ENCODE measurements at regions of chr19 and their contacts with region 1.

Region 1: GRCh38 chr19:39001041-39001440 is 25.5 kb upstream of the FBXO17 start:
- DNase-seq: no peak
- ATAC-seq: no peak
- H3K4me3 ChIP-seq: no peak overlapping the region
- H3K27ac ChIP-seq: no peak overlapping the region
- H3K4me1 ChIP-seq: peaks cover 13% of the 10 kb centered on the region
- H3K27me3 ChIP-seq: no peaks in the 10 kb centered on the region
- CTCF ChIP-seq: no peak
- EP300 ChIP-seq: no peak
- POLR2A ChIP-seq: no peak
- RAD21 ChIP-seq: no peak

Region 2: DNA sequence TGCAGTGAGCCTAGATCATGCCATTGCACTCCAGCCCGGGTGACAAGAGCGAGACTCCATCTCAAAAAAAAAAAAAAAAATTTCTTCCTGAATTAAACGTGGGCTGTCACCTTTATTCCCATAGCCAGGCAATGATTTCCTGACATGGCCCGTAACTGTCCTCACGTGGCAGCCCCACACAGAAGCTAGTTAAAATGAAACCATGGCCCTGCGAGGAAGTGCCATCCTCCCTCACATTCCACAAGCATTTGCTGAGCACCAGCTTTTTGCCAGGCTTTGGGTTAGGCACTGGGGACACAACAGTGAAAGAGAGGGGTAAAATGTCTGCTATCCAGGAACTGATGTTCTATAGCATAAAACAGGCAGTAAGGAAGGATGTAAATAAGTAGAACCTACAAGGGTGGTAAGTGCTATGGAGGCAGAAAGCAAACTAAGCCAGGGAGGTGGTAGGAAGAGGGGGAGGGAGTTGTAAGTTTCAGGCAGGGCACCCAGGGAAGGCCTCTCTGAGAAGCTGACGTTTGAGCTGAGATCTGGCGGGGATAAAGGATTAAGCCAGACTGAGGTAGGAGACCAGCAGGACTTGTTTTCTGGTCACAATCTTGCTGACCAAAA is 44.6 kb after region 1 on chr19:
- CTCF ChIA-PET with region 1: no interaction called
- POLR2A ChIA-PET with region 1: no interaction called
- in situ Hi-C with region 1: no loop called
- intact Hi-C with region 1: loop called (anchors 1 kb)
- DNase-seq: no peak
- ATAC-seq: no peak
- H3K4me3 ChIP-seq: no peak overlapping the region; a peak in 1 of 6 replicates
- H3K27ac ChIP-seq: no peak overlapping the region
- H3K4me1 ChIP-seq: peaks cover 7% of the 10 kb centered on the region; the same call in 1 of the 2 replicates
- H3K27me3 ChIP-seq: no peaks in the 10 kb centered on the region; a peak in 1 of 5 replicates
- CTCF ChIP-seq: no peak
- EP300 ChIP-seq: no peak
- POLR2A ChIP-seq: no peak
- RAD21 ChIP-seq: no peak